OCI-LY7 (cell line): ENCODE measurements at regions of chr11 and their contacts with region 1.

Region 1: DNA sequence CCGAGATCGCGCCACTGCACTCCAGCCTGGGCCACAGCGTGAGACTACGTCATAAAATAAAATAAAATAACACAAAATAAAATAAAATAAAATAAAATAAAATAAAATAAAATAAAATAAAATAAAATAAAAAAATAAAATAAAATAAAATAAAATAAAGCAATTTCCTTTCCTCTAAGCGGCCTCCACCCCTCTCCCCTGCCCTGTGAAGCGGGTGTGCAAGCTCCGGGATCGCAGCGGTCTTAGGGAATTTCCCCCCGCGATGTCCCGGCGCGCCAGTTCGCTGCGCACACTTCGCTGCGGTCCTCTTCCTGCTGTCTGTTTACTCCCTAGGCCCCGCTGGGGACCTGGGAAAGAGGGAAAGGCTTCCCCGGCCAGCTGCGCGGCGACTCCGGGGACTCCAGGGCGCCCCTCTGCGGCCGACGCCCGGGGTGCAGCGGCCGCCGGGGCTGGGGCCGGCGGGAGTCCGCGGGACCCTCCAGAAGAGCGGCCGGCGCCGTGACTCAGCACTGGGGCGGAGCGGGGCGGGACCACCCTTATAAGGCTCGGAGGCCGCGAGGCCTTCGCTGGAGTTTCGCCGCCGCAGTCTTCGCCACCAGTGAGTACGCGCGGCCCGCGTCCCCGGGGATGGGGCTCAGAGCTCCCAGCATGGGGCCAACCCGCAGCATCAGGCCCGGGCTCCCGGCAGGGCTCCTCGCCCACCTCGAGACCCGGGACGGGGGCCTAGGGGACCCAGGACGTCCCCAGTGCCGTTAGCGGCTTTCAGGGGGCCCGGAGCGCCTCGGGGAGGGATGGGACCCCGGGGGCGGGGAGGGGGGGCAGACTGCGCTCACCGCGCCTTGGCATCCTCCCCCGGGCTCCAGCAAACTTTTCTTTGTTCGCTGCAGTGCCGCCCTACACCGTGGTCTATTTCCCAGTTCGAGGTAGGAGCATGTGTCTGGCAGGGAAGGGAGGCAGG is at the start of gene GSTP1:
- DNase-seq: peak; percentile 91
- H3K4me3 ChIP-seq: peak within 1 kb of the TSS; percentile 88
- H3K27ac ChIP-seq: peak within 1 kb of the TSS; percentile 84
- H3K4me1 ChIP-seq: peaks cover 68% of the 10 kb centered on the region
- CTCF ChIP-seq: peak; percentile 79
- total RNA-seq, gene GSTP1: 1,251 and 1,604 TPM in 2 replicates

Region 2: GRCh38 chr11:67353317-67354074 is 230.0 kb before region 1 on chr11 and contains the start of gene POLD4:
- CTCF ChIA-PET with region 1: no interaction called
- POLR2A ChIA-PET with region 1: no interaction called
- intact Hi-C with region 1: loop called (anchors 10 kb)
- DNase-seq: peak; percentile 99
- H3K4me3 ChIP-seq: peak within 1 kb of the TSS; percentile 77
- H3K27ac ChIP-seq: peak within 1 kb of the TSS; percentile 93
- H3K4me1 ChIP-seq: peaks cover 78% of the 10 kb centered on the region
- CTCF ChIP-seq: no peak
- total RNA-seq, gene POLD4: 146 and 153 TPM in 2 replicates

Region 3: DNA sequence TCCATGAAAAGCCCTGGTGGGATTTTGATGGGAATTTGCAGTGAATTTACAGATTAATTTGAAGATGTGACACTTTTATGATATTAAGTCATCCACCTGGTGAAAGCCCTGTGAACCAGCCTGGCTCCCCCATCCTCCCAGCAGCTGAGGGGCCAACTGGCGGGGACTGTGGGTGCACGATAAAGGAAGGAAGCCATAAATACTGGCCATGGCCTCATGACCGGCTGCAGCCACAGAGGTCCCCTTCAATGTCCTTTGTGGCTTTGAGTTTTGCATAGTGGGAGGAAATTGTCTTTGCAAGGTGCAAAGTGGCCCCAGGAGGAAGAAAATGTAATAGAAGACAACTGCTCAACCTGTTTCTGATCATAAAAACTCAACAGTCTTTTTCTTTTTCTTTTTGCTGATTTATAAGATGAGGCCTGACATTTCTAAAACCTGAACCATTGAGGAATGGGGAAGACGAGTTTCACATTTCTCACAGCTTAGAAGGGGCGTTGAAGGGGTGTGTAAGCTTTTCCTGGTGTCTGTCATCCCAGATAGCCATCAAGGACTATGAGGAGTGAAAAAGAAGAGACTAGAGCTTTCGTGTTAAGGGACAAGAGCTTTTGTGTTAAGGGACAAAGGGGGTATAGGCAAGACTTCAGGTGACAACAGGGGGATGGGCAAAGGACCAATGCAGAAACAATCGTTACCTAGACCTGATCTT is 17.0 kb after region 1 on chr11:
- CTCF ChIA-PET with region 1: no interaction called
- POLR2A ChIA-PET with region 1: interaction called, 3 read pairs
- intact Hi-C with region 1: loop called (anchors 1 kb)
- DNase-seq: peak; percentile 82
- H3K4me3 ChIP-seq: peak overlapping the region; percentile 53
- H3K27ac ChIP-seq: peak overlapping the region; percentile 67
- H3K4me1 ChIP-seq: peaks cover 25% of the 10 kb centered on the region
- CTCF ChIP-seq: no peak

Region 4: GRCh38 chr11:67606492-67607201 is 23.1 kb after region 1 on chr11 and contains the start of gene NDUFV1:
- CTCF ChIA-PET with region 1: no interaction called
- POLR2A ChIA-PET with region 1: no interaction called
- intact Hi-C with region 1: loop called (anchors 1 kb)
- DNase-seq: peak; percentile 98
- H3K4me3 ChIP-seq: peak within 1 kb of the TSS; percentile 98
- H3K27ac ChIP-seq: peak within 1 kb of the TSS; percentile 41
- H3K4me1 ChIP-seq: peaks cover 24% of the 10 kb centered on the region
- CTCF ChIP-seq: peak; percentile 61
- total RNA-seq, gene NDUFV1: 257 and 283 TPM in 2 replicates

Region 5: GRCh38 chr11:67630228-67630942 is 46.9 kb after region 1 on chr11:
- CTCF ChIA-PET with region 1: no interaction called
- POLR2A ChIA-PET with region 1: interaction called, 6 read pairs
- intact Hi-C with region 1: loop called (anchors 1 kb)
- DNase-seq: peak; percentile 99
- H3K4me3 ChIP-seq: peak overlapping the region; percentile 77
- H3K27ac ChIP-seq: peak overlapping the region; percentile 52
- H3K4me1 ChIP-seq: peaks cover 23% of the 10 kb centered on the region
- CTCF ChIP-seq: peak; percentile 75

Region 6: GRCh38 chr11:67674442-67674901 is 90.9 kb after region 1 on chr11 and contains the start of gene ALDH3B2:
- CTCF ChIA-PET with region 1: interaction called, 10 read pairs
- POLR2A ChIA-PET with region 1: no interaction called
- intact Hi-C with region 1: no loop called
- DNase-seq: no peak
- H3K4me3 ChIP-seq: no peak within 1 kb of the TSS
- H3K27ac ChIP-seq: no peak within 1 kb of the TSS
- H3K4me1 ChIP-seq: peaks cover 7% of the 10 kb centered on the region
- CTCF ChIP-seq: no peak
- total RNA-seq, gene ALDH3B2: 1.5 and 2.9 TPM in 2 replicates